RWPE1 (cell line): ENCODE measurements at regions of chr20 and their contacts with region 1.

Region 1: DNA sequence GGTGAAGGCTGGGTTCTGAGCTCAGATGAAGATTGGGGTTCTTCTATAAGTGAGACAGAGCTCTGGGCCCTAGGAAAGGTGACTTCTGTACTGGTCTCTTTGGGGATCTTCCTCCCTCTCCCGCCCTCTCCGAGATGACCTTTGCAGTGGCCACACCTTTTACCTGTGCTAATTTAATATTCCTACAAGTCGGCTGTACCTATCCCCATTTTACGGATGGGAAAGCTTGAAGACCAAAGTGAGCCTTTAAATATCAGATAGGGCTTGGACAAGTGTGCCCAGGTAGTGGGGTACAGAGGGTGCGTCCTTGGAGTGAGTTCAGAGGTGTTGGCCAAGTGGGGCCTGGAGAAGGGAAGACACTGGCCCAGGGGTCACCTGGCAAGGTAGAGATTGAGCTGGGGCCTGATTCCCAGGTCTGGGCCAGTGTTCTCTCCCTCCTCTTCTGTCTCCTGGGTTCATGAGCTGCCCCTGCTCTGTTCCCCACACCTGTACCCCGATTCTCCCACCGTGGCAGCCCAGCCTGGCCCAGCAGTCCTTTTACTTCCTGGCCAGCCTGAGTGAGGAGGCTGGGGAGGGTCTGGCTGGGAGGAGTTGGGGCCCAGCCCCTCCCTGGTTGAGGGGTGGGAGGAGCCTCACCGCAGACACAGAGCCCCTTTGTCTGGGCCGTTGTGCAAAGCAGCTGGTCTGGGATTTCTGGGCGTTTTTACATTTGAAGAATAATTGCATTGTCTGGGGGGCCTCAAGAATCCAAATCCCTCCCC is 152.1 kb upstream of the RNF24 start:
- DNase-seq: no peak
- H3K27ac ChIP-seq: no peak overlapping the region
- CTCF ChIP-seq: no peak

Region 2: GRCh38 chr20:4108495-4109306 is 58.7 kb before region 1 on chr20:
- CTCF ChIA-PET with region 1: interaction called, 13 read pairs
- POLR2A ChIA-PET with region 1: no interaction called
- DNase-seq: peak; percentile 83
- H3K27ac ChIP-seq: peak overlapping the region; percentile 26
- CTCF ChIP-seq: peak; percentile 100

Region 3: GRCh38 chr20:4180356-4180755 is 12.9 kb after region 1 on chr20:
- CTCF ChIA-PET with region 1: no interaction called
- POLR2A ChIA-PET with region 1: no interaction called
- DNase-seq: no peak
- H3K27ac ChIP-seq: no peak overlapping the region
- CTCF ChIP-seq: no peak